ENCODE measurements at regions of chr9 and their contacts with region 1.

Region 1: GRCh38 chr9:15543047-15543813 is 9.6 kb upstream of the CCDC171 start:
- DNase-seq: peak; percentile 46
- ATAC-seq: peak; percentile 72
- H3K4me3 ChIP-seq: no peak overlapping the region
- H3K27ac ChIP-seq: no peak overlapping the region
- H3K4me1 ChIP-seq: peaks cover 5% of the 10 kb centered on the region
- H3K27me3 ChIP-seq: no peaks in the 10 kb centered on the region
- CTCF ChIP-seq: no peak
- POLR2A ChIP-seq: no peak
- RAD21 ChIP-seq: no peak

Region 2: DNA sequence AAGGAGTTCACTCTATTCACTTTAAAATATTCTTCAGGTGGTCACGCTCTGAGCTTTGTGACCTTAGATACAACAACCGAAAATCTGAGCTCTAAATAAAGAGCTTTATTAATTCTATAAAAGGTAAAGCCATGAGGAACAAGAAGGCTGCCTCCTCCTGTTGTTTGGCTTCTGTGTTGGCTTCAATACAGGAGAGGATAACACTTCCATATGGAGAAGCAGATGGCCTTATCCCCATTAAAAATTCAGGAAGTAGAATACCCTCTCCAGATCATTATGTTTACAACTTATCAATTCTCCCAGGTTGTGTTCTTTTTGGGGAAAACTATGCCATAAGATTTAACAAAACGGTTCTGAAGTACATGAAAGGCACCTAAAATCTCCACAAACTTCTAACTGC is 364.6 kb before region 1 on chr9:
- CTCF ChIA-PET with region 1: no interaction called
- POLR2A ChIA-PET with region 1: no interaction called
- dilution Hi-C with region 1: no loop called
- in situ Hi-C with region 1: no loop called
- intact Hi-C with region 1: no loop called
- DNase-seq: no peak
- ATAC-seq: no peak
- H3K4me3 ChIP-seq: no peak overlapping the region
- H3K27ac ChIP-seq: no peak overlapping the region
- H3K4me1 ChIP-seq: no peaks in the 10 kb centered on the region; the same call in 1 of the 2 replicates
- H3K27me3 ChIP-seq: no peaks in the 10 kb centered on the region
- CTCF ChIP-seq: no peak
- POLR2A ChIP-seq: no peak
- RAD21 ChIP-seq: no peak

Region 3: DNA sequence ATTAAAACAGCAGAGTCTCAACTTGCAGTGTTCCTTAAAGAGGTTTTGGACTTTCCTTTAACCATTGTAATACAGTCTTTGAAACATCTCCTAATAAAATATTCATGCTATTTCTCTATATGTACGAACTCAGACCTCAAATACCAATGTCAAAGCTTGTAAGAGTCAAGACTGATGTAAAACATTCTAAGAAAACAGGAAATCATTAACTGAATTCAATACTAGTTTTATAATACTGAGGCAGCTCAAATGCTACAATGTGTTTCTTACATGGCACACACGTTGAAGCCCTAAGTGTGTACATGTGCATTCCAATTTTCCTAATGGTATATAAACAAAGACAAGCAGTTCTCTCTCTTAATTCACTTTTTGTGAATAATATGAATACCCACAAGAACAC is 44.1 kb before region 1 on chr9:
- CTCF ChIA-PET with region 1: interaction called, 11 read pairs
- POLR2A ChIA-PET with region 1: no interaction called
- dilution Hi-C with region 1: no loop called
- in situ Hi-C with region 1: no loop called
- intact Hi-C with region 1: no loop called
- DNase-seq: no peak
- ATAC-seq: peak; percentile 53
- H3K4me3 ChIP-seq: no peak overlapping the region
- H3K27ac ChIP-seq: no peak overlapping the region
- H3K4me1 ChIP-seq: 0 out of 2 replicates have a peak, but pooled peaks cover 1% of the 10 kb centered on the region
- H3K27me3 ChIP-seq: no peaks in the 10 kb centered on the region
- CTCF ChIP-seq: no peak
- POLR2A ChIP-seq: no peak
- RAD21 ChIP-seq: no peak

Region 4: DNA sequence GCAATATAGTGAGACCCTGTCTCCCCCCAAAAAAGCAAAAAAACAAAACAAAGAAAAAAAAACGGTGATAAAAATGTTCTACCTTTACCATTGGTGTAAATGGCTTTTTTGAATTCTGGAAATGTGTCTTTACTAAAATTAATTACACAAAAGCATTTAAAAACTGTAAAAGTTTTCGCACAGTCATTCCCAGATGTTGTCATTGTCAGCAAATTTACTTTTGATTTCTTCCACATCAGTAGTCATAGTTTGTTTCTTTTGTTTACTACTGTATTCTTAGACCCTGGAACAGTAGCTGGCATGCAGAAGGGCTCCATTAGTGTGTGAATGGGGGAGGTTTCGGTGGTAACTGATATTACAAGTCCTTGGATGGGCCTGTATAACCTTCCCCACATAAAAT is 49.1 kb after region 1 on chr9:
- CTCF ChIA-PET with region 1: no interaction called
- POLR2A ChIA-PET with region 1: no interaction called
- dilution Hi-C with region 1: no loop called
- in situ Hi-C with region 1: no loop called
- intact Hi-C with region 1: no loop called
- DNase-seq: no peak
- ATAC-seq: no peak
- H3K4me3 ChIP-seq: no peak overlapping the region
- H3K27ac ChIP-seq: no peak overlapping the region
- H3K4me1 ChIP-seq: no peaks in the 10 kb centered on the region
- H3K27me3 ChIP-seq: no peaks in the 10 kb centered on the region
- CTCF ChIP-seq: no peak
- POLR2A ChIP-seq: no peak
- RAD21 ChIP-seq: no peak

Region 5: GRCh38 chr9:15642369-15642962 is 99.2 kb after region 1 on chr9:
- CTCF ChIA-PET with region 1: no interaction called
- POLR2A ChIA-PET with region 1: no interaction called
- dilution Hi-C with region 1: no loop called
- in situ Hi-C with region 1: no loop called
- intact Hi-C with region 1: no loop called
- DNase-seq: peak; percentile 53
- ATAC-seq: peak; percentile 40; the same call in 1 of the 2 replicates
- H3K4me3 ChIP-seq: no peak overlapping the region
- H3K27ac ChIP-seq: no peak overlapping the region
- H3K4me1 ChIP-seq: no peaks in the 10 kb centered on the region
- H3K27me3 ChIP-seq: no peaks in the 10 kb centered on the region
- CTCF ChIP-seq: peak; percentile 58
- POLR2A ChIP-seq: no peak
- RAD21 ChIP-seq: peak; percentile 45

Region 6: DNA sequence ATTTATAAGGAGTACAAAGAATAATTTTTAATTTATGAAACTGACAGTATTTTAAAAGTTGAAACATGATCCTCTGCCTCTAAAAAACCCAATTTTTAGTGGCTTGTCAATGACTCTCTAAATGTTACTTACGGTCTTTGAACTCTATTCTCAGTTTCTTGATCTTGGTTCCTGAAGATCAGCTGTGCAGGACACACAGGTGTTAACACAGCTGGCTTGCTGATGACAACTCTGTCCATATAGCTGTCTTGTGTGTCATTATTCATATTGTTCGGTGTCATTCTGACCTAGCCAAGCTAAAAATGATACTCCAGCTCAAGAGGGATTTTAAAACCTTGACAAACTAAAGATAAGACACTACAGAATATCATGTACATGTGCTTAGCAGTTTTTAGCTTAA is 324.1 kb after region 1 on chr9:
- CTCF ChIA-PET with region 1: no interaction called
- POLR2A ChIA-PET with region 1: no interaction called
- dilution Hi-C with region 1: no loop called
- in situ Hi-C with region 1: no loop called
- intact Hi-C with region 1: no loop called
- DNase-seq: no peak
- ATAC-seq: no peak
- H3K4me3 ChIP-seq: no peak overlapping the region
- H3K27ac ChIP-seq: no peak overlapping the region
- H3K4me1 ChIP-seq: no peaks in the 10 kb centered on the region
- H3K27me3 ChIP-seq: no peaks in the 10 kb centered on the region
- CTCF ChIP-seq: no peak
- POLR2A ChIP-seq: no peak
- RAD21 ChIP-seq: no peak